ENCODE measurements at regions of chr1 and their contacts with region 1.

Region 1: GRCh38 chr1:230867903-230868735 is at the start of gene C1orf198:
- DNase-seq: peak; percentile 78 to 88
- ATAC-seq: peak; percentile 89 to 95 (median 89)
- H3K4me3 ChIP-seq: peak within 1 kb of the TSS; percentile 85
- H3K27ac ChIP-seq: peak within 1 kb of the TSS; percentile 90
- H3K4me1 ChIP-seq: peaks cover 42% of the 10 kb centered on the region
- H3K27me3 ChIP-seq: no peaks in the 10 kb centered on the region
- CTCF ChIP-seq: no peak
- total RNA-seq, gene C1orf198: 32.0 to 122 (median 86.7) TPM

Region 2: GRCh38 chr1:230807029-230807428 is 61.1 kb before region 1 on chr1:
- intact Hi-C with region 1: loop called in 1 of 2 experiments (anchors 5 kb)
- DNase-seq: peak; percentile 67 to 89
- ATAC-seq: peak; percentile 93 to 97 (median 96)
- H3K4me3 ChIP-seq: no peak overlapping the region
- H3K27ac ChIP-seq: peak overlapping the region; percentile 65
- H3K4me1 ChIP-seq: no peaks in the 10 kb centered on the region
- H3K27me3 ChIP-seq: no peaks in the 10 kb centered on the region
- CTCF ChIP-seq: no peak

Region 3: DNA sequence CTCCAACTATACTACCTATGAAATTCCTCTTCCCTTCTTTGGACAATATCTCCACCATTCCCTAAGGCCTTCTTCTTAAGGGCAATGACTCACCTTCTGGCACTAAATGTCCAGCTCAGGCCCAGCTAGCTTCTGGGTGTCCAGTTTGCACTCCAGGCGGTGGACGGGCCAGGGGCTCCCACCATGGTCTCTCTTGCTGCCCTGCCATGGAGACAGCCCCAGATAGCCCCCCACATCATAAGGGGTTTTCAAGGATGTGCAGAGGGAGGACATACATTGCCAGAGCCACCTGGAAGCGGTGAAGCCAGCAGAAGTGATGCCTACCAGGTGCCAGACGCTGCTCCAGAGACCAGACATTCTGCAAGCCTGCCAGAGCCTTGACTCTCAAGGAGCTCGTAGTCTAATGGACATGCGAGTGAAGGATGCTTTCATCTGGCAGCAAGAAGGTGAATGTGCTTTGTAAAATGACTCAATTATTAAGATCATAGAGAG is 43.5 kb before region 1 on chr1:
- intact Hi-C with region 1: loop called in 1 of 2 experiments (anchors 5 kb)
- DNase-seq: no peak
- ATAC-seq: peak; percentile 50 to 66 (median 58)
- H3K4me3 ChIP-seq: peak overlapping the region; percentile 13
- H3K27ac ChIP-seq: peak overlapping the region; percentile 89
- H3K4me1 ChIP-seq: peaks cover 56% of the 10 kb centered on the region
- H3K27me3 ChIP-seq: no peaks in the 10 kb centered on the region
- CTCF ChIP-seq: no peak

Region 4: GRCh38 chr1:231836227-231836893 is 968.2 kb after region 1 on chr1:
- intact Hi-C with region 1: no loop called
- DNase-seq: no peak
- ATAC-seq: no peak
- H3K4me3 ChIP-seq: no peak overlapping the region
- H3K27ac ChIP-seq: no peak overlapping the region
- H3K4me1 ChIP-seq: no peaks in the 10 kb centered on the region
- H3K27me3 ChIP-seq: no peaks in the 10 kb centered on the region
- CTCF ChIP-seq: no peak